ENCODE measurements at regions of chr3 and their contacts with region 1.

Region 1: GRCh38 chr3:50542177-50543034 is 25.1 kb downstream of the C3orf18 start:
- DNase-seq: peak; percentile 57
- H3K4me3 ChIP-seq: no peak overlapping the region
- H3K27ac ChIP-seq: no peak overlapping the region
- H3K4me1 ChIP-seq: no peaks in the 10 kb centered on the region
- H3K27me3 ChIP-seq: peaks cover 13% of the 10 kb centered on the region
- CTCF ChIP-seq: peak; percentile 89

Region 2: GRCh38 chr3:50347194-50347918 is 195.1 kb before region 1 on chr3:
- intact Hi-C with region 1: loop called (anchors 5 kb)
- DNase-seq: peak; percentile 61
- H3K4me3 ChIP-seq: no peak overlapping the region
- H3K27ac ChIP-seq: peak overlapping the region; percentile 16
- H3K4me1 ChIP-seq: peaks cover 44% of the 10 kb centered on the region
- H3K27me3 ChIP-seq: no peaks in the 10 kb centered on the region
- CTCF ChIP-seq: peak; percentile 70

Region 3: GRCh38 chr3:50436114-50436674 is 106.2 kb before region 1 on chr3:
- intact Hi-C with region 1: loop called (anchors 5 kb)
- DNase-seq: peak; percentile 67
- H3K4me3 ChIP-seq: no peak overlapping the region
- H3K27ac ChIP-seq: no peak overlapping the region
- H3K4me1 ChIP-seq: no peaks in the 10 kb centered on the region
- H3K27me3 ChIP-seq: no peaks in the 10 kb centered on the region
- CTCF ChIP-seq: peak; percentile 86

Measured in left ventricle myocardium inferior (tissue), 1 donor.